ENCODE measurements at regions of chr9 and their contacts with region 1.

Region 1: DNA sequence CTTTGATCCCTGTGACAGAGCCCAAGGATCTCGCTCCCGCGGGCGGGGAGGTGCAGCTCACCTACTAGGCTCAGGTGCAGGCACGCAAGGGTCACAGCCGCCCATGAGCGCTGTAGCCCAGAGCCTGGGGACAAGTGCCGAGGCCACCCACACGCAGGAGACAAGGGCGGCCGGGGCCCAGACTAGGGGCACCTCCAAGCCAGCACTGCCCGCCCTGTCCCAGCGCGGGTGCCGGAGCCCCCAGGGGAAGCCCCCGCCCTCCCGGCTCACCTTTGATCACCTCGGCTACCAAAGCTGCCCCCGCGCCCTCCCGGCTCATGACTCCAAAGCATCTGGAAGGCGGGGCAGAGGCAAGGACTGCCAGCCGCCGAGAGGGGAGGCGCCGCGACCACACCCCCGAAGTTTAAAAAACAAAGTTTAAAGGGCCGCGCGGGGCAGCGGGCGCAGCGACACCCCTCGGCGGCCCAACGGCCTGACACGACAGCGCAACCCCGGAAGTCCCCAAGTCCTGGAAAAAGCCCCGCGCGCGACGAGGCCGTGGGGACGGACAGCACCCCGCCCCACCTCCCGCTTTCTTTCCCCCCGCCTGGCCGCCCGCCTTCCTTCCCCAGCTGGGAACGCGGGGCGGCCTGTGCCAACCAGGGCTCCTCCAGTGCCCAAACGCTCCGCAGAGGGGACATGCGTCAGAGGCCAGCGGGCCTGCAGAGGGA is 53.0 kb downstream of the CDC14B start:
- DNase-seq: peak; percentile 67
- H3K4me3 Mint-ChIP-seq: peak overlapping the region; percentile 79
- H3K27ac Mint-ChIP-seq: peak overlapping the region; percentile 72
- H3K4me1 Mint-ChIP-seq: peaks cover 26% of the 10 kb centered on the region
- H3K27me3 Mint-ChIP-seq: peaks cover 14% of the 10 kb centered on the region

Region 2: DNA sequence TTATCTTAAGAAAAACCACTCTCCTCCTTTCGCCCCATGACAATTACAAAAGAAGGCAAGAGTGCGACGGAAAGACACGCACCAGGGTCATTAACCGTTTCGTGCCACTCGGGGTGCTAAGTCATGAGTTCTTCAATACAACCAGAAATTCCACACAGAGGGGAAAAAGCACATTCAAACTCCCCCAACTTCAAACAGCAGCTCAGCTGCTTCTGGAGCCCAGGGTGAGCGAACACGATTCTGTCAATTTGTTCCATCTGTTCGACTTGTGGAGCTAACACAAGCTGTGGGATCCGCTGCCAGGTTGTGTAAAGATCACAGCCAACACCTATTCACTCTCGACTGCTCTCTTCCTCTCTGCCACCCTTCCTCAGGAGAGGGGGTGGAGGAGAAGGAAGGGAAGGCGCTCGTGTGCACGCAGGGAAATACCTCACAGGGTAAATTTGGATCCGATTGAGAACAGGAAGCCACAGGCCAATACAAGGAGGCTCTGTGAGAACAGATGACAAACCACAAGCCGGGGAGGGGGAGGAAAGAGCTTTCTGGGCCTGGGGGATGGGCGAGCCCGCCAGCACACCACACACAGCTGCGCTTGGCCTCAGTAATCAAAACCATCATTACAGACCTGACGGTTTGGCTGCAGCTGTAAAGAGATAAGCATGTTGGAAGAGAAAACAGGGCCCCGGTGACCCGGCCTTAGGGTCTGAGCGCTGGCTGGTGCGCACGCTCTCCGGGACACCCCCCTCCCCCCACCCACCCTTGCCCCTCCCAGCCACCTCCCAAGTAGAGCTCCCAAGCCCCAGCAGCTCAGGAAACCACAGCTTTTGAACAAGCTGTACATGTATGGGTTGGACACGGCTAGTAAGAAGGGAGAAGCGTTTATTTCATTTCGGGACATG is 1104.2 kb before region 1 on chr9:
- intact Hi-C with region 1: loop called (anchors 10 kb)
- DNase-seq: peak; percentile 78
- H3K4me3 Mint-ChIP-seq: peak overlapping the region; percentile 77
- H3K27ac Mint-ChIP-seq: peak overlapping the region; percentile 82
- H3K4me1 Mint-ChIP-seq: peaks cover 34% of the 10 kb centered on the region
- H3K27me3 Mint-ChIP-seq: peaks cover 53% of the 10 kb centered on the region

Region 3: DNA sequence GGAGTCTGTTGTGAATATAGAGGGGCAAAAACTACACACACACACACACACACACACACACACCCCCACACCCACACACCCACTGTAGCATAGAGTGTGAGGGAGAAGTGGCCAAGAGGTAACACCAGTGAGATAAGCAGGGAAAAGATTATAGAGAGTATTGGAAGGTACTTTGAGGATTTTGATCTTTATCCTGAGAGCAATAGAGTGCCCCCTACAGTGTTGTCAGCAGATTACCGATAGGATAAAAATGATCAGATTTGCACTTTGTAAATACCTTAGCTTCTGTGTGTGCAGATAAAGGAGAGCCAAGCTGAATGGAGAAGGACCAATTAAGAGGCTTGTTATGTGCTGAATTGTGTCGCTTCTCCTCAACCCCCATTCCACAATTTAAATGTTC is 658.9 kb before region 1 on chr9:
- intact Hi-C with region 1: no loop called
- DNase-seq: no peak
- H3K4me3 Mint-ChIP-seq: no peak overlapping the region
- H3K27ac Mint-ChIP-seq: no peak overlapping the region
- H3K4me1 Mint-ChIP-seq: peaks cover 11% of the 10 kb centered on the region
- H3K27me3 Mint-ChIP-seq: no peaks in the 10 kb centered on the region

Region 4: DNA sequence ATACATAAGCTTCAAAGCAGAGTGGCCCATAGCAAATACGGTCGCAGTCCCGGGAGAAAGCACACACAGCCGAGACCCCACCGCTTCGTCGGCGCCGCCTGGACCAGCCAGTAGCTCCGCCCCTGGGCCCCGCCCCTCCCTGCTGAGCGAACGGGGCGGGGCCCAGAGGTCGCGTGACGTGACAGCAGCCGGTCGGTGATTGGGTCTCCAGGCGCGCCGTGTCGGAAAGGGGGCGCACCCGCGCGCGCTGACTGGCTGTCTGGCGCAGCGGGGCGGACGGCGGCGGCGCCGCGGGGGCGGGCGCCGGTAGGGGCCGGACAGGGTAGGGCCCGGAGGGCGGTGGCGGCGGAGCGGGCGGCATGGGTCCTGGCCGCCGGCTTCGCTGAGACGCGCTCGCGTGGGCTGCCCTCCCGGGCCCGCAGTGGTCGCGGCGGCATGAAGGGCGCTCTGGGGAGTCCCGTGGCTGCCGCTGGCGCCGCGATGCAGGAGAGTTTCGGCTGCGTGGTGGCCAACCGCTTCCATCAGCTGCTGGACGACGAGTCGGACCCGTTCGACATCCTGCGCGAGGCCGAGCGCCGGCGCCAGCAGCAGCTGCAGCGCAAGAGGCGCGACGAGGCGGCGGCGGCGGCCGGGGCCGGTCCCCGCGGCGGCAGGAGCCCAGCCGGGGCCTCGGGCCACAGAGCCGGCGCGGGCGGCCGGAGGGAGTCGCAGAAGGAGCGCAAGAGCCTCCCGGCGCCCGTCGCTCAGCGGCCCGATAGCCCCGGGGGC is 116.6 kb before region 1 on chr9 and contains the start of gene HABP4:
- intact Hi-C with region 1: loop called (anchors 1 kb)
- DNase-seq: peak; percentile 94
- H3K4me3 Mint-ChIP-seq: peak within 1 kb of the TSS; percentile 87
- H3K27ac Mint-ChIP-seq: peak within 1 kb of the TSS; percentile 55
- H3K4me1 Mint-ChIP-seq: peaks cover 23% of the 10 kb centered on the region
- H3K27me3 Mint-ChIP-seq: peaks cover 29% of the 10 kb centered on the region
- total RNA-seq, gene HABP4: 10.8 and 11.1 TPM in 2 replicates

Region 5: GRCh38 chr9:96491079-96491879 is 75.4 kb before region 1 on chr9:
- intact Hi-C with region 1: loop called (anchors 1 kb)
- DNase-seq: no peak
- H3K4me3 Mint-ChIP-seq: no peak overlapping the region
- H3K27ac Mint-ChIP-seq: peak overlapping the region; percentile 78
- H3K4me1 Mint-ChIP-seq: peaks cover 9% of the 10 kb centered on the region
- H3K27me3 Mint-ChIP-seq: no peaks in the 10 kb centered on the region

Region 6: DNA sequence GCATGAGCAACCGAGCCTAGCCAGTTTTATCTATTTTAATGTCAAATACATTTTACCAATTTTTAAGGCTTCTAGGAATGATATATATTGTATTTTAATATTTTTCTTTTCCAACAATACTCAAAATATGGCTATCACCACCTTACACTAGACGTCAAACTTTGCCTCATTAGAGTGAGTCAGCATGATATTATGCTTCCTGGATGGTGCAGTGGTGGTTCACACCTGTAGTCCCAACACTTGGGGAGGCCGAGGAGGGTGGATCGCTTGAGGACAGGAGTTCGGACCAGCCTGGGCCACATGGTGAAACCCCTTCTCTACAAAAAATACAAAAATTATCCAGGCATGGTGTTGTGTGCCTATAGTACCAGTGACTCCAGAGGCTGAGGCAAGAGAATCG is 60.3 kb after region 1 on chr9:
- intact Hi-C with region 1: loop called (anchors 5 kb)
- DNase-seq: no peak
- H3K4me3 Mint-ChIP-seq: no peak overlapping the region
- H3K27ac Mint-ChIP-seq: no peak overlapping the region
- H3K4me1 Mint-ChIP-seq: peaks cover 7% of the 10 kb centered on the region
- H3K27me3 Mint-ChIP-seq: peaks cover 9% of the 10 kb centered on the region

Region 7: DNA sequence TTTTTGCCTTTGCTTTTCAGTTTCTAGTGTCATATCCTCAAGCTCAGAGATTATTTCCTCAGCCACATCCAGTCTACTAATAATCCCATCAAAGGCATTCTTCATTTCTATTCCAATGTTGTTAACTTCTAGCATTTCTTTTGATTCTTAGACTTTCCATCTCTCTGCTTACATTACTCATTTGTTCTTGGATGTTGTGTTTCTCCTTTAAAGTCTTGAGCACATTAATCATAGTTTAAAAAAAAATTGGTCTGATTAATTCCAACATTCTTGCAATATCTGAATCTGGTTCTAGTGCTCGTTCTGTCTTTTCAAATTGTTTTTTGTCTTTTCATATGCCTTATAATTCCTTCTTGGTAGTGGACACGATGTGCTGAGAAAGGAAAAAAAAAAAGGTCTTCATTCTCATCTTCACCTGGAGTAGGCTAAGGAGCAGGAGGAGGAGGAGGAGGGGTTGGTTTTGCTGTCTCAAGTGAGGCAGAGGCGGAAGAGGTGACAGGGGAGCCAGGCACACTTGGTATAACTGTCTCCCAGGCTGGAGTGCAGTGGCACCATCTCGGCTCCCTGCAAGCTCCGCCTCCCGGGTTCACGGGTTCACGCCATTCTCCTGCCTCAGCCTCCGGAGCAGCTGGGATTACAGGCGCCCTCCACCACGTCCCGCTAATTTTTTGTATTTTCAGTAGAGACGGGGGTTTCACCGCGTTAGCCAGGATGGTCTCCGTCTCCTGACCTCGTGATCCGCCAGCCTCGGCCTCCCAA is 72.1 kb after region 1 on chr9:
- intact Hi-C with region 1: no loop called
- DNase-seq: no peak
- H3K4me3 Mint-ChIP-seq: no peak overlapping the region
- H3K27ac Mint-ChIP-seq: no peak overlapping the region
- H3K4me1 Mint-ChIP-seq: no peaks in the 10 kb centered on the region
- H3K27me3 Mint-ChIP-seq: peaks cover 13% of the 10 kb centered on the region

Region 8: GRCh38 chr9:96777426-96777864 is 210.8 kb after region 1 on chr9:
- intact Hi-C with region 1: loop called (anchors 1 kb)
- DNase-seq: no peak
- H3K4me3 Mint-ChIP-seq: peak overlapping the region; percentile 100
- H3K27ac Mint-ChIP-seq: peak overlapping the region; percentile 93
- H3K4me1 Mint-ChIP-seq: peaks cover 19% of the 10 kb centered on the region
- H3K27me3 Mint-ChIP-seq: peaks cover 2% of the 10 kb centered on the region